GM12878 (cell line): ENCODE measurements at regions of chr14 and their contacts with region 1.

Region 1: GRCh38 chr14:67666750-67667449 is 7.5 kb downstream of the VTI1B start:
- DNase-seq: peak; percentile 30
- ATAC-seq: peak; percentile 80
- H3K4me3 ChIP-seq: no peak overlapping the region
- H3K27ac ChIP-seq: no peak overlapping the region
- H3K4me1 ChIP-seq: peaks cover 17% of the 10 kb centered on the region
- H3K27me3 ChIP-seq: no peaks in the 10 kb centered on the region
- CTCF ChIP-seq: peak; percentile 57 to 71 (median 65)
- EP300 ChIP-seq: no peak
- POLR2A ChIP-seq: no peak
- RAD21 ChIP-seq: peak; percentile 86

Region 2: DNA sequence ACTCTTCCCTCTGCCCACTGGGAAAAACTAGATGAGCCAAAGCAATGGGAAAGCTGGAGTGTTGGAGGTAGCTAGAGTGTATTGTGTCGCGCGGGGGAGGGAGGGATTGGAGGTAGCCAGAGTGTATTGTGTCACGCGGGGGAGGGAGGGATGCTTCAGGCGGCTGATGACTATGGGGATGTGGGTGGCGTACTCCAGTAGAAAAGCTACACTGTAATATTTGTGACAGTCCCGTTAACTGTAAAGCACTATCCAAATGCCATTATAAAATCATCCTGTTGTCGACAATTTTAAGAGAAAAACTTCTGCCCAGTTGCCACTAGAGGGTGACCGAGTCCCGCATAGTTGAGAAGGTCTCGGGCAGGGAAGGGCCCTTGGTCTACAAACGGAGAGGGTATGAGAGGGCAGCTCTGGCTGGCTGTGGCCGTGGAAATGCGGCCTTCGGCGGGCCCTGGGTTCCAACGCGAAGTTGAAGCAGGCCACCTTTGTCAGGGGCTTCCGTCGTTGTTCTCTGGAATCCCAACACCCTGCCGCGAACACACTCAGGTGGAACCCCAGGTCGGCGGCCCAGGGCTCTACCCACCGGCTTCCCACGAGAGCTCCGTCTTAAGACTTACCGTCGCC is 239.8 kb before region 1 on chr14:
- CTCF ChIA-PET with region 1: interaction called, 10 read pairs
- POLR2A ChIA-PET with region 1: interaction called, 4 read pairs
- RAD21 ChIA-PET with region 1: interaction called, 26 read pairs
- SMC1A ChIA-PET with region 1: interaction called, 6 read pairs
- in situ Hi-C with region 1: no loop called
- intact Hi-C with region 1: loop called (anchors 2 kb)
- DNase-seq: no peak
- ATAC-seq: peak; percentile 95
- H3K4me3 ChIP-seq: no peak overlapping the region
- H3K27ac ChIP-seq: no peak overlapping the region
- H3K4me1 ChIP-seq: no peaks in the 10 kb centered on the region
- H3K27me3 ChIP-seq: peaks cover 0 to 6% of the 10 kb centered on the region in 2 experiments; a peak in 2 of 4 replicates
- CTCF ChIP-seq: peak; percentile 84 to 90 (median 87)
- EP300 ChIP-seq: no peak
- POLR2A ChIP-seq: no peak
- RAD21 ChIP-seq: peak; percentile 99

Region 3: GRCh38 chr14:67571272-67571850 is 95.5 kb before region 1 on chr14:
- CTCF ChIA-PET with region 1: interaction called, 25 read pairs
- POLR2A ChIA-PET with region 1: no interaction called
- RAD21 ChIA-PET with region 1: interaction called, 7 read pairs
- SMC1A ChIA-PET with region 1: interaction called, 16 read pairs
- in situ Hi-C with region 1: no loop called
- intact Hi-C with region 1: no loop called
- DNase-seq: no peak
- ATAC-seq: peak; percentile 98
- H3K4me3 ChIP-seq: no peak overlapping the region
- H3K27ac ChIP-seq: no peak overlapping the region
- H3K4me1 ChIP-seq: no peaks in the 10 kb centered on the region
- H3K27me3 ChIP-seq: no peaks in the 10 kb centered on the region
- CTCF ChIP-seq: peak; percentile 91 to 96 (median 96); a peak in 5 of 6 replicates
- EP300 ChIP-seq: no peak
- POLR2A ChIP-seq: no peak
- RAD21 ChIP-seq: peak; percentile 92

Region 4: GRCh38 chr14:67589204-67589770 is 77.6 kb before region 1 on chr14:
- CTCF ChIA-PET with region 1: interaction called, 142 read pairs
- POLR2A ChIA-PET with region 1: interaction called, 4 read pairs
- RAD21 ChIA-PET with region 1: interaction called, 114 read pairs
- SMC1A ChIA-PET with region 1: interaction called, 133 read pairs
- in situ Hi-C with region 1: loop called (anchors 5 kb)
- intact Hi-C with region 1: loop called (anchors 1 kb)
- DNase-seq: no peak
- ATAC-seq: no peak
- H3K4me3 ChIP-seq: no peak overlapping the region
- H3K27ac ChIP-seq: no peak overlapping the region
- H3K4me1 ChIP-seq: no peaks in the 10 kb centered on the region
- H3K27me3 ChIP-seq: no peaks in the 10 kb centered on the region
- CTCF ChIP-seq: no peak
- EP300 ChIP-seq: no peak
- POLR2A ChIP-seq: no peak
- RAD21 ChIP-seq: no peak

Region 5: DNA sequence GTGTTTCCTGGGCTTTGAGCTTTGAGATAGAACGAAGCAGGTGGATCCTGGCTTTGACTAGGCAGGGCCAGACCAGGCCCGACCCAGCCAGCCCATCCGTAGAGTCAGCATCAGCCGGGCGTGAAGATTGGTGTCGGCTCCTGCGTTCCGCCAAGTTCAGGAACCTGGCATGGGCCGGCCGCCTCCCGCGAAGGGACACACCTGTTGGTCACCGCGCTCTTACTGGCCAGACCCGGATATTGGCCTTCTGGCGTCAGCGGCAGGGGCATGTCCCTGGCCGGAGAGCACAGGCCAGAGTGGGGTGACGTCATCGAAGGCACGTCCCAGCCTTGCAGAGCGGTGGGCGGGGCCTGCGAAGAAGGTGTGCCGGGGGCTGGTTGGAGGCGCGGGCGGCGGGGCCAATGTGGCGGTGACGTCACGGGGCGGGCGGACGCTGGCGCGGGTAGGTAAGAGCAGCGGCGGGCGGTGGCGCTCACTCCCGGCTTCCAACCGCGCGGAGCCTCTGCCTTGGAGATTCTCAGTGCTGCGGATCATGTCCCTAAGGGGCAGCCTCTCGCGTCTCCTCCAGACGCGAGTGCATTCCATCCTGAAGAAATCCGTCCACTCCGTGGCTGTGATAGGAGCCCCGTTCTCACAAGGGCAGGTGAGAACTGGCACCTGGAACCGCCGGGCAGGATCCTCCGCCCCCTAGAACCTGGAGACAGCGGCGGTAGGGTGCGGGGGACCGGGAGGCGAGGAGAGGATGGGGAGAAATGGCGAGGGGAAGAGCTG is 47.3 kb before region 1 on chr14 and contains the start of gene ARG2:
- CTCF ChIA-PET with region 1: interaction called, 152 read pairs
- POLR2A ChIA-PET with region 1: interaction called, 3 read pairs
- RAD21 ChIA-PET with region 1: interaction called, 73 read pairs
- SMC1A ChIA-PET with region 1: interaction called, 151 read pairs
- in situ Hi-C with region 1: no loop called
- intact Hi-C with region 1: loop called (anchors 1 kb)
- DNase-seq: peak; percentile 65
- ATAC-seq: peak; percentile 97
- H3K4me3 ChIP-seq: peak within 1 kb of the TSS; percentile 82
- H3K27ac ChIP-seq: no peak within 1 kb of the TSS
- H3K4me1 ChIP-seq: peaks cover 5% of the 10 kb centered on the region; the same call in 1 of the 2 replicates
- H3K27me3 ChIP-seq: no peaks in the 10 kb centered on the region
- CTCF ChIP-seq: peak in 1 of 3 experiments; percentile 32; a peak in 1 of 6 replicates
- EP300 ChIP-seq: no peak
- POLR2A ChIP-seq: peak; percentile 56
- RAD21 ChIP-seq: no peak
- polyA plus RNA-seq, gene ARG2: 2.1 to 3.2 TPM

Region 6: DNA sequence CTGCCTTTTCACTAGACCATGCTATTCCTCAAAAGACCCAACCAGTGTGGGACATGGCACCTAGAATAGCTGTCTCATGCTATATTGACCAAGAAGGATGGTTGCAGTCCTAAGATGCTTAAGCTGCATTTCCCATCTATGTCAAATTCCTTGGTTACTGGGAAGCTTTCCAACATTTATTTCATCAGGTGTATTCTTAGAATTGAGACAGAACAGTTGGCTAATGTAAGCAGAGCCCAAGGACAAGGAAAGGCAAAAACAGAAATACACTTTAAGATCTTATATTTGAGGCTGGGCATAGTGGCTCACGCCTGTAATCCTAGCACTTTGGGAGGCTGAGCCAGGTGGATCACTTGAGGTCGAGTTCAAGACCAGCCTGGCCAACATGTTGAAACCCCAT is 22.5 kb before region 1 on chr14:
- CTCF ChIA-PET with region 1: interaction called, 14 read pairs
- POLR2A ChIA-PET with region 1: interaction called, 4 read pairs
- RAD21 ChIA-PET with region 1: interaction called, 7 read pairs
- SMC1A ChIA-PET with region 1: interaction called, 15 read pairs
- in situ Hi-C with region 1: no loop called
- intact Hi-C with region 1: no loop called
- DNase-seq: no peak
- ATAC-seq: no peak
- H3K4me3 ChIP-seq: no peak overlapping the region
- H3K27ac ChIP-seq: no peak overlapping the region
- H3K4me1 ChIP-seq: no peaks in the 10 kb centered on the region
- H3K27me3 ChIP-seq: no peaks in the 10 kb centered on the region
- CTCF ChIP-seq: no peak
- EP300 ChIP-seq: no peak
- POLR2A ChIP-seq: no peak
- RAD21 ChIP-seq: no peak

Region 7: DNA sequence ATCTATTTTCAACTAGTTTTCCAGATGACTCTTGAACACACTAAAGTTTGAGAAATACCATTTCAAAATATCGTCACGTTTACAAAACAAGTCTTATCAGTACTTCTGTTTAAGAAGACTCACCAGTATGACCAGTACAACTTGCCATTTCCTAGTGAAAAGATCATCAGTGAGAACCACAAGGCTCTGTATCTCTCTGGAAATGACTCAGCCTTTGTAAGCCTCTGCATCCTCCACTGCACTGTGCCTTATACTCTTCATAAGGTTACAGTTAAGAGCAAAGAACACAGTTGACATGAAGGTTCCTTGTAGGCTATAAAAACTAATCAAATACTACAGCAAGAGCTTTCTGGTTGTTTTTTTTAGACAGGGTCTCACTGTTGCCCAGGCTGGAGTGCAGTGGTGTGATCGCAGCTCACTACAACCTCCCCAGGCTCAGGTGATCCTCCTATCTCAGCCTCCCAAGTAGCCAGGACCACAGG is 13.3 kb after region 1 on chr14:
- CTCF ChIA-PET with region 1: interaction called, 8 read pairs
- POLR2A ChIA-PET with region 1: interaction called, 8 read pairs
- RAD21 ChIA-PET with region 1: interaction called, 14 read pairs
- SMC1A ChIA-PET with region 1: interaction called, 10 read pairs
- in situ Hi-C with region 1: no loop called
- intact Hi-C with region 1: no loop called
- DNase-seq: peak; percentile 90
- ATAC-seq: peak; percentile 98
- H3K4me3 ChIP-seq: peak overlapping the region; percentile 25; the same call in 1 of the 2 replicates
- H3K27ac ChIP-seq: peak overlapping the region; percentile 58
- H3K4me1 ChIP-seq: peaks cover 22% of the 10 kb centered on the region
- H3K27me3 ChIP-seq: no peaks in the 10 kb centered on the region
- CTCF ChIP-seq: no peak
- EP300 ChIP-seq: peak; percentile 54 to 91; a peak in 2 of 4 replicates
- POLR2A ChIP-seq: no peak
- RAD21 ChIP-seq: no peak